Activated T-helper 1 cell treated with anti-CD3 and anti-CD28 coated beads, Interleukin-12 subunit alpha, Interleukin-12 subunit beta, Interleukin-2, Interleukin-4 antibody, amounts not matched to agents 30 ng/mL and 10 ng/mL and 1 ng/mL, durations not matched to agents 14 hours and 24 hours and 36 hours (primary cell): ENCODE measurements at regions of chr16 and their contacts with region 1.

Region 1: DNA sequence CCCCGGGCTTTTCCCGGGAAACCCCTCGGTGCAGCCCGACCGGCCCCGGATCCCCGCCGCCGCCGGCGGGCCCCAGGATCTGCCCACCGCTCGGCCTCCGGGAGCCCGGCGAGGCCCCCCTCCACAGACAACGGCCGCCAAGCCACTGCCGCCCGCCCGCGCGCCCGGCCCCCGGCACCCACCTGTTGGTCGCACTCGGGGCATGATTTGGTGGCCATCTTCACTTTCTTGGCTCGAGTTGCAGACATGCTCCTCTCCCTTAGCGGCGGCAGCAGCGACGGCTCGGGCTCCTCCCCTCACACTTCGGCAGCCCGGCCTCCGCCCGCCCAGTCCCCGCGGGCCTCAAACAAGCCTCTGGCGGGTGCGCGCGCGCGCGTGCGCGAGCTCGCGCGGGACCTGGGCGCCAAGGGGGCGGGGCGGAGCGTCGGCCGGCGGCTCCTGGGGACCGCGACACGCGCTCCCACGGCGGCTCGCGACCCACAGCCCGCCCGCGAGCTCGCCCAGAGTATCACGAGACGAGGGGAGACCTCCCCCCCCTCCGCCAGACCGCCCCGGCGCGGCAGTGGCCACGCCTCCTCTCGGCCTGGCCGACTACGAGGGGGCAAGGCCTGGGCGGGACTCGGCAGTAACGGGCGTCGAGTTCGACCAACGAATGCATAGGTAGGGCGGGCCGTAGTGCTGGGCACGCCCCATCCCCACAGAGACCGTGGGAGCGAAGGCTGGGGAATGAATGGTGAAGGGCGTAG is at the start of gene C16orf87:
- DNase-seq: peak; percentile 90
- H3K4me3 Mint-ChIP-seq: peak within 1 kb of the TSS; percentile 97
- H3K27ac Mint-ChIP-seq: peak within 1 kb of the TSS; percentile 98
- H3K4me1 Mint-ChIP-seq: peaks cover 40% of the 10 kb centered on the region
- H3K27me3 Mint-ChIP-seq: peaks cover 10% of the 10 kb centered on the region
- total RNA-seq, gene C16orf87: 40.8 and 44.5 TPM in 2 replicates

Region 2: GRCh38 chr16:46621006-46621933 is 209.8 kb before region 1 on chr16 and contains the start of gene SHCBP1:
- intact Hi-C with region 1: loop called (anchors 1 kb)
- DNase-seq: peak; percentile 80
- H3K4me3 Mint-ChIP-seq: peak within 1 kb of the TSS; percentile 97
- H3K27ac Mint-ChIP-seq: peak within 1 kb of the TSS; percentile 97
- H3K4me1 Mint-ChIP-seq: peaks cover 39% of the 10 kb centered on the region
- H3K27me3 Mint-ChIP-seq: no peaks in the 10 kb centered on the region
- total RNA-seq, gene SHCBP1: 46.5 and 46.8 TPM in 2 replicates

Region 3: GRCh38 chr16:46789499-46790414 is 41.3 kb before region 1 on chr16:
- intact Hi-C with region 1: loop called (anchors 1 kb)
- DNase-seq: peak; percentile 79
- H3K4me3 Mint-ChIP-seq: peak overlapping the region; percentile 61
- H3K27ac Mint-ChIP-seq: peak overlapping the region; percentile 59
- H3K4me1 Mint-ChIP-seq: peaks cover 22% of the 10 kb centered on the region
- H3K27me3 Mint-ChIP-seq: peaks cover 4% of the 10 kb centered on the region

Region 4: GRCh38 chr16:46812781-46813540 is 18.1 kb before region 1 on chr16:
- intact Hi-C with region 1: loop called (anchors 1 kb)
- DNase-seq: no peak
- H3K4me3 Mint-ChIP-seq: peak overlapping the region; percentile 6
- H3K27ac Mint-ChIP-seq: peak overlapping the region; percentile 86
- H3K4me1 Mint-ChIP-seq: peaks cover 48% of the 10 kb centered on the region
- H3K27me3 Mint-ChIP-seq: no peaks in the 10 kb centered on the region

Region 5: DNA sequence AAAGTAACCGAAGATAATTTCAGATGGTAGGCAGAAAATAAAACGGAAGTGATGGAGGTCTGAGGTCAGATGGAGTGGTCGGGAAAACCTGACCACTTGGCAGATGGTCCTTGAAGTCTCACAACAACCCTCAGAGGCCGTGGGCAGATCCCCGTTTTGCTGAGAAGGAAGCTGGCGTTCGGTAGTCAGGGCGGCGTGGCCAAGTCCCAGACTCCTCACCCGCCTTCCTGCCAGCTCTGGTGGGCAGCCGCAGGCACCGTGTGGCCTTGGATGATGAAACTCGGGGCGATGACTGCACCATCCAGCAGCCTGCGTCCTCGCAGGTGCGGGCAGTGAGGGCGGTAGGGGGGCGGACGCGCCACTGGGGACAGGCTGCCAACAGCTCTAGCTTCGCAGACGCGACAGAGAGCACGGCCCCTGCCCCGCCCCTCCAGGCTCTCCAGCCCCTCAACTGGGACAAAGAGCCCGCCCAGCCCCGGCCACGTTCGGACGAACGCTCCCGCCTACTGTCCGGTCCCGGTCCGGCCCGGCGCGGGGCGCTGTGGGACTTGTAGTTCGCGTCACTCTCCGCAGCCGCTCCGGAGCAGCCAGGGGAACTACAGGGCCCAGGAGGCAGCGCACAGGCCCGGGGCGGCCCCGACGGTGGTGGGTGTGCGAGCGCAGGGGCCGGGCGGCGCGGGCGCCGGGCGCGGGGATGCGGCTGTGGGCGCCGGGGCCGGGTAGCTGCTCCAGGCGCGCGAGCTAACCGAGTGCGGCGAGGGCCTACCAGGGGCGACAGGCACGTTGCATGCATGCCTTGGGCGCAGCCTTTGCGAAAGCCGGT is 52.8 kb after region 1 on chr16 and contains the start of gene GPT2:
- intact Hi-C with region 1: loop called (anchors 1 kb)
- DNase-seq: peak; percentile 82
- H3K4me3 Mint-ChIP-seq: peak within 1 kb of the TSS; percentile 87
- H3K27ac Mint-ChIP-seq: peak within 1 kb of the TSS; percentile 76
- H3K4me1 Mint-ChIP-seq: peaks cover 17% of the 10 kb centered on the region
- H3K27me3 Mint-ChIP-seq: peaks cover 12% of the 10 kb centered on the region
- total RNA-seq, gene GPT2: 20.9 and 22.3 TPM in 2 replicates

Region 6: DNA sequence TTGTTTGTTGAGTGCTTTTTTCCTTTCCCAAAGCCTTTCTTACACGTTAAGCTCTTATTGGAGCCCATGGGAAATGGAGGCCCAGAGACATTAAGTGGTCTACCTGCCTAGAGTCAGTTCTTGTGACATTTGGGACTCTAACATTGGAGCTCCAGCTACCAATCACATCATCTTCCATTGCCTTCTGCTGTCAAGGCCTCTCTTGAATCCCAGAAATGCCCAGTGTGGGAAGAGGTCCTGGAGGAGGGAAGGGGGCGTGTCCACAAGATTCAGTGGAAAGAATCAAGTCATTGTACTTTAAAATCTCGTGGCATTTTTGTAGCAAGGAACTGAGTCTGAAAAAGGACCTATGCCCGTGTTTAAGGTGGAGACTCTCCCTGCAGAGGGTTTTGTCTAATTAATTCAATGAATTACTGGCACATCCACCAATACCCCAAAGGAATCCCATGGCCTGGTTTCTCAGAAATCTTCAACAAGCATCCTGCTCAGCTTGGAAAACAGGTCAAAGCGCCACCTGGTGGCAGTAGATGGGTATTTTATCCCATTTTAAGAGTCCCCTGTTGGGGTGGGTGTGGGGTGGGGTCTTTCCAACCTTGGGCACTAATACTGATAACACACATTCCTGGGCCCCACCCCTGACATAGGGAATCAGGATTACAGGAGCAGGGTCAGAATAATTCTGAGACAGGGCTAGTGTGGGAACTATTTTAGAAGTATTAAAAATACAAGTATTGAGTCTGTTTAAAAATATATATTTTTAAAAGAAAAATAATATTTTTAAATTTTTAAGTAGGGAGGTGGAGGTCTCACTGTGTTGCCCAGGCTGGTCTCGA is 77.7 kb after region 1 on chr16:
- intact Hi-C with region 1: loop called (anchors 1 kb)
- DNase-seq: peak; percentile 37
- H3K4me3 Mint-ChIP-seq: no peak overlapping the region
- H3K27ac Mint-ChIP-seq: peak overlapping the region; percentile 34
- H3K4me1 Mint-ChIP-seq: peaks cover 16% of the 10 kb centered on the region
- H3K27me3 Mint-ChIP-seq: no peaks in the 10 kb centered on the region

Region 7: DNA sequence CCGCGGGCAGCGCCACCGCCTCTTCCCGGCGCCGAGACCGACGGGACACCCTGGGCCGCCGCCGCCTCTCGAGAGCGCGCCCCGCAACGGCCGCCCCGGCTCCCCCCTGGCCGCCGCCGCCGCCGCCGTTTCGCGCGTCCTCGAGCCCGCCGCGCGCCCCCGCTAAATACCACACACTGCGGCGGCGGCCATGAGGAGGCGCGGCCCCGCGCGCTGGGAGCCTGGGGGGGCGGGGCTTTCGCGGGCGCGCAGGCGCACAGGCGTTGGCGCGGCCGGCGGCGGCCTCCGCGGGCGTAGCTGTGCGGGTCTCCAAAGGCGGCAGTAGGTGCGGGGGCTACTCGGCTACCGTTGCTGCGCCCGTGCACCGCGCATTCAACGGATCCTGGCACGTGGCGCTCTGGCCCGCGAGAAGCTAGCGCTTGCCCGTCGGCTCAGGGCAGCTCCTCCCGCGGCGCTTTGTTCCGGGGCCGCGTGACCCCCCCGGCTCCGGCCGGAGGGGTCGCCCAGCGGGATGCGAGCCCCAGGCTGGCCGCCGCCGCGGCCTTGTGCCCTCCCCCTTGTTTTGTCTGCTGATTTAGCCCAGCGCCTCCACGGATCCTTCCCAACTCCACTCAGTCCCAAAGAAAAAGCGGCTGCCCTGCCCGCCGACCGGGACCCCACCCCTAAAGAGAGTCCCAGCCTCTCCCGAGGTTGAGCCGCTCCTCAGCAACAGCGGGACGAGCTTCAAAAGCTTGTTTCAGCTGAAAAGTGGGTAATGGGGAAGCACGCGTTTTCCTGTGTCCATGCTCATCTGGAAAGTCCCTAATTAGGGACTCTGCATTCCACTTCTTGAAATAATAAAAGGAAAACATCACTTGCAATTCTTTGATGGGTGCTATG is 1554.4 kb after region 1 on chr16 and contains the start of gene SIAH1:
- intact Hi-C with region 1: loop called (anchors 2 kb)
- DNase-seq: peak; percentile 85
- H3K4me3 Mint-ChIP-seq: peak within 1 kb of the TSS; percentile 97
- H3K27ac Mint-ChIP-seq: peak within 1 kb of the TSS; percentile 95
- H3K4me1 Mint-ChIP-seq: peaks cover 29% of the 10 kb centered on the region
- H3K27me3 Mint-ChIP-seq: peaks cover 3% of the 10 kb centered on the region
- total RNA-seq, gene SIAH1: 15.6 and 16.8 TPM in 2 replicates